PC-9 (cell line): ENCODE measurements at regions of chr10 and their contacts with region 1.

Region 1: GRCh38 chr10:99906470-99906869 is 103.3 kb downstream of the DNMBP start:
- DNase-seq: peak; percentile 75 to 88
- H3K4me3 ChIP-seq: no peak overlapping the region
- H3K27ac ChIP-seq: peak overlapping the region; percentile 63
- H3K4me1 ChIP-seq: peaks cover 22% of the 10 kb centered on the region
- H3K27me3 ChIP-seq: no peaks in the 10 kb centered on the region
- CTCF ChIP-seq: peak; percentile 51

Region 2: DNA sequence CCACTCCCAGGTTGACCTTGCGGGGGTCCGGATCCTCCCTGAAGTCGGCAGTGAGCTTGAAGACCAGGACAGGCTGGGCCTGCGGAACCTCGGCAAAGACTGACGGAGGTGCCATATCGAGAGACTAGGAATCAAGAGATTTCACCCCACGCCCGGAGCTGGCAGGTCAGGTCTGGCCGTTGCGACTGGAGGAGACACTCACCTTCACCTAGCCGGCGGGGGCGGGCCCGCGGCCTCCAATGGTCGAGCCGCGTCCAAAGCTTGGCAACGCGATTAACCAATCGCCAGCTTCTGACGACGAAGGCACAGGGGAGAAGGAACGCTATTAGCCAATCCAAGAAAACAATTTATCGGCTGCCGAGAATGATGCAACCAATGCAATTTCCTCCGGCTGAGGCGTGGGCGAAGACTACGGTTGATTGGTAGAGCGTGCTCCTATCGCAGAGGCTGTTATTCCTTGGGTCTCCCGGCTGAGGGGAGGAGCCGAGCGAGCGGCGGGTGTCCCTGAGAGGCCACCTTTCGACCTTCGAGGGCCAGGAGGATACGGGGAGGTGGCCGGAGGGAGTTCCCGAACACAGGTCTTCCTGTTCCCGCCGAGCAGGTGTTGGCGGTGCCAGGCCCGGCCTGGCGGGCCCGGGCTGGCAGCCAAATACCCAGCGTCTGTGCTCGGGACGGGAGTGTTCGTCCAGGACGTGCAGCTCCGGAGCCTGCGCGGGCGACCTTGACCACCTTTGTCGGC is 475.9 kb before region 1 on chr10 and contains the start of gene GOT1:
- CTCF ChIA-PET with region 1: no interaction called
- POLR2A ChIA-PET with region 1: interaction called, 14 read pairs
- intact Hi-C with region 1: no loop called
- DNase-seq: peak; percentile 88 to 96
- H3K4me3 ChIP-seq: peak within 1 kb of the TSS; percentile 88
- H3K27ac ChIP-seq: peak within 1 kb of the TSS; percentile 71
- H3K4me1 ChIP-seq: no peaks in the 10 kb centered on the region
- H3K27me3 ChIP-seq: no peaks in the 10 kb centered on the region
- CTCF ChIP-seq: no peak
- total RNA-seq, gene GOT1: 27.5 and 28.6 TPM in 2 replicates

Region 3: GRCh38 chr10:99930731-99931550 is 24.5 kb after region 1 on chr10:
- CTCF ChIA-PET with region 1: interaction called, 3 read pairs
- POLR2A ChIA-PET with region 1: interaction called, 3 read pairs
- intact Hi-C with region 1: loop called (anchors 2 kb)
- DNase-seq: peak; percentile 70 to 96
- H3K4me3 ChIP-seq: peak overlapping the region; percentile 87
- H3K27ac ChIP-seq: peak overlapping the region; percentile 98
- H3K4me1 ChIP-seq: peaks cover 20% of the 10 kb centered on the region
- H3K27me3 ChIP-seq: no peaks in the 10 kb centered on the region
- CTCF ChIP-seq: no peak

Region 4: GRCh38 chr10:99966306-99966705 is 59.8 kb after region 1 on chr10:
- CTCF ChIA-PET with region 1: no interaction called
- POLR2A ChIA-PET with region 1: no interaction called
- intact Hi-C with region 1: loop called (anchors 5 kb)
- DNase-seq: peak; percentile 59 to 95
- H3K4me3 ChIP-seq: no peak overlapping the region
- H3K27ac ChIP-seq: peak overlapping the region; percentile 81
- H3K4me1 ChIP-seq: peaks cover 35% of the 10 kb centered on the region
- H3K27me3 ChIP-seq: no peaks in the 10 kb centered on the region
- CTCF ChIP-seq: no peak

Region 5: DNA sequence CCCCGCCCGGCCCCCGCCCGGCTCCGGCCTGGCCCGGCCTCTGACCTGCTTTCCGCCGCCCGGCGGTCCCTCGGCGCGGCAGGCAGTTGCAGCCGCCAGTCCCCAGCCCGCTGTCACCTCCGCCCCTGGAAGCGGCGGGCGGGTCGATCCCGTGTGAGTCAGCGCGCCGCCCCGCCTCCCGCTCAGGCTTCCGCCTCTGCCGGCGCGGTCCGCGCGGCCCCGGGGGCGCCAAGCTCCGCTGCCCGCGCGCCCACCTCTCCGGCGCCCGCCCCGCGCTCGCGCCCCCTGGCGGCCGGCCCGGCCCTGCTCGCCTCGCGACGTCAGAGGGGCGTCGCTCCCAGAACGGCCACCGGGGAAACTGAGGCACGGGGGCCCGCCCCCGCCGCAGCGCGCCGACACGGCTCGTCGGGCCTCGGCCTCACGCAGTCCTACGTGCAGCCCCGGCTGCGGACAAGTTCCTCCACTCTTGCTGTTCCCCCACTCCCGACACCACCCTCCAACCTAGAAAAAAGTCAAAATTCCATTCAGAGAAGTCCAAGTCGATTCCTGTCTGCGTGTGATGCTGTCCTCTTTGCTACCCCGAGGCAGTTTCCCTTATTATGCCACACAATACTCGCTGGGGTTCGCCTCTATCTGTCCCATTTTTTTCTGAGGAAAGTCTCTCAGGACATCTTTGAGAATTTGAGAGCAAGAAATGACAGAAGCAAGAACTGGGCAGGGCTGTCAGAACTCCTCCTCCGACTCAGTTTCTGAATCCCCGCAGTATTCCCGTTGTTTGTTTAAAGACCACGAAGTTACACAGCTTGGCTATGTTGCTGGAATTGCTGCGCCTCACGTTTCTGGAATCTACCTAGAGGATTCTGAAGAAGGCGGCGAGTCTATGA is 103.6 kb after region 1 on chr10 and contains the start of gene DNMBP:
- CTCF ChIA-PET with region 1: no interaction called
- POLR2A ChIA-PET with region 1: interaction called, 4 read pairs
- intact Hi-C with region 1: loop called (anchors 1 kb)
- DNase-seq: peak; percentile 59 to 76
- H3K4me3 ChIP-seq: peak within 1 kb of the TSS; percentile 81
- H3K27ac ChIP-seq: peak within 1 kb of the TSS; percentile 93; the same call in 1 of the 2 replicates
- H3K4me1 ChIP-seq: peaks cover 34% of the 10 kb centered on the region
- H3K27me3 ChIP-seq: no peaks in the 10 kb centered on the region
- CTCF ChIP-seq: peak; percentile 58
- total RNA-seq, gene DNMBP: 11.8 and 14.9 TPM in 2 replicates